Dorsolateral prefrontal cortex (tissue), 120 donors: ENCODE measurements at regions of chr20 and their contacts with region 1.

Region 1: GRCh38 chr20:42672403-42672802 is 517.3 kb downstream of the PTPRT start:
- DNase-seq: no peak
- H3K4me3 ChIP-seq: no peak overlapping the region
- H3K27ac ChIP-seq: no peak overlapping the region
- H3K27me3 ChIP-seq: no peaks in the 10 kb centered on the region
- CTCF ChIP-seq: no peak

Region 2: DNA sequence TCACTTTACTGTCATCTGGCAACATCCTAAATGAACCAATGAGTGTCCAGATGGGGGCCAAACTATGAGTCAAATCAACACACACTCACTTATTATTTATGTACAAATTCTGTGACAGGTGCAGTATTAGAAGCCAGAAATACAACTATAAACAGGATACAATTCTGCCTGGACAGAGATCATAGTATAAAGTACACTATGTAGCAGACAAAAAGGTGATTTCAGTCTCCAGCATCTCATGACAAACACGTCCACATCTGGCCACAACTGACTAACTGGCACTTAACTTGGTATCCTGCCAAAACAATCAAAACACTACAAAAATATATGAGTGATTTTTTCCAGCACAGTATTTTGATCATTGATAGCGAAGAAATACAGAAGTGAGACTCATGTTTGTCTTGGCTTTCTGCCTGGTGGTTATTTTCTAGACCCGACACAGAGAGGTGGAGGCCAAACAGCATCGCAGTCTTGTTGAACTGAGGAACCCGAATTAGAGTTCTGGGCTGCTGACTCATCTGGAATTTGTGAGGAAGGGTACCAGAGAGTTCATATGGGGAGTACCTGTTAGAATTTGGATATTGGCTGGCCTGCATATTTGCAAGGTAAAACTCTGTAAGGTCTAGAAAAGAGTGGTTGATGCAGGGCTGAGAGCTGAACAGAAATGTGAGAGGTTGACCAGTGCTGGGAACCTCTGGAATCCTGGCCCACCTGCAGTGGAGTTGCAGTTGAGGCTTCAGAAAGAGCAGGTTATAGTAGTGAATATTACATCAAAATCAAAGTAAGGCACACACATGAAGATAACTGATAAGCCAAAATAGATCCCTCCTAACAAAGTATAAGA is 42.1 kb after region 1 on chr20:
- intact Hi-C with region 1: loop called in 1 of 2 experiments (anchors 2 kb)
- DNase-seq: no peak
- H3K4me3 ChIP-seq: no peak overlapping the region
- H3K27ac ChIP-seq: no peak overlapping the region
- H3K27me3 ChIP-seq: peaks cover 0 to 4% (median 0%) of the 10 kb centered on the region in 45 donors
- CTCF ChIP-seq: no peak